GM12878 (cell line): ENCODE measurements at regions of chr20 and their contacts with region 1.

Region 1: DNA sequence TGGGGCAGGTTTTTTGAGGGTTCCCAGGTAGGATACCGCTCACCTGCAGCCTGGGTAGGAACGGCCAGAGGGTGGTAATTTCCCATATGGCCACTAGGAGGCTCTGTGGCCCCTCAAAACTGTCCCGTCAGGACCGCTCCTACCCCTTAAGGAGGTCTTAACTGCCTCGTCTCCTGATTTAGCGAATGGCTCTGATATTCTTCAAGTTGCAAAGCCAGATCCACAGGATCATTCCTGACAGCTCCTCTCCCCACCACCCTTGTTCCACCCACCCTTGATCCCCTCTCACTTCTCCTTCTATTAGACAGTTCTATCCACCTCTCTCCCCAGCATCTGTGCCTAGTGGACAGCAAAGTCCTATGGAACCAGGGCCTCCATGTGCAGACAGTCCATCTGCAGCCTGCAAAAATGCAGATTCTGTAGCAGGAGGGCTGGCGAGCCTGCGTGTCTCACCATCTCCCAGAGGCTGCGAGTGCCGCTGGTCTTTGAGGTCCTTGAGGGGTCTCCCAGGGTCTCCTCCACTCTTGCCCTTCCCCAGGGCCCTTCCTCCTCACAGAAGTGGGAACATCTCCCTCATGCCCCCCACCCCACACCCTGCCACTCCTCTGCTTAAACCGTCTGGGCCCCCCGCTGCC is 34.3 kb upstream of the ZBP1 start:
- DNase-seq: no peak
- ATAC-seq: peak; percentile 97
- H3K4me3 ChIP-seq: no peak overlapping the region
- H3K27ac ChIP-seq: no peak overlapping the region
- H3K4me1 ChIP-seq: no peaks in the 10 kb centered on the region
- H3K27me3 ChIP-seq: no peaks in the 10 kb centered on the region
- CTCF ChIP-seq: peak; percentile 88 to 96 (median 94)
- EP300 ChIP-seq: no peak
- POLR2A ChIP-seq: no peak
- RAD21 ChIP-seq: peak; percentile 93

Region 2: GRCh38 chr20:57573890-57574289 is 80.6 kb before region 1 on chr20:
- CTCF ChIA-PET with region 1: no interaction called
- POLR2A ChIA-PET with region 1: no interaction called
- RAD21 ChIA-PET with region 1: no interaction called
- SMC1A ChIA-PET with region 1: no interaction called
- in situ Hi-C with region 1: no loop called
- intact Hi-C with region 1: no loop called
- DNase-seq: no peak
- ATAC-seq: no peak
- H3K4me3 ChIP-seq: no peak overlapping the region
- H3K27ac ChIP-seq: no peak overlapping the region
- H3K4me1 ChIP-seq: no peaks in the 10 kb centered on the region
- H3K27me3 ChIP-seq: peaks cover 0 to 4% of the 10 kb centered on the region in 2 experiments; a peak in 2 of 4 replicates
- CTCF ChIP-seq: 0 out of 6 replicates have a peak, but pooled peaks of 1 of the 3 experiments have one; percentile 20
- EP300 ChIP-seq: no peak
- POLR2A ChIP-seq: no peak
- RAD21 ChIP-seq: no peak

Region 3: DNA sequence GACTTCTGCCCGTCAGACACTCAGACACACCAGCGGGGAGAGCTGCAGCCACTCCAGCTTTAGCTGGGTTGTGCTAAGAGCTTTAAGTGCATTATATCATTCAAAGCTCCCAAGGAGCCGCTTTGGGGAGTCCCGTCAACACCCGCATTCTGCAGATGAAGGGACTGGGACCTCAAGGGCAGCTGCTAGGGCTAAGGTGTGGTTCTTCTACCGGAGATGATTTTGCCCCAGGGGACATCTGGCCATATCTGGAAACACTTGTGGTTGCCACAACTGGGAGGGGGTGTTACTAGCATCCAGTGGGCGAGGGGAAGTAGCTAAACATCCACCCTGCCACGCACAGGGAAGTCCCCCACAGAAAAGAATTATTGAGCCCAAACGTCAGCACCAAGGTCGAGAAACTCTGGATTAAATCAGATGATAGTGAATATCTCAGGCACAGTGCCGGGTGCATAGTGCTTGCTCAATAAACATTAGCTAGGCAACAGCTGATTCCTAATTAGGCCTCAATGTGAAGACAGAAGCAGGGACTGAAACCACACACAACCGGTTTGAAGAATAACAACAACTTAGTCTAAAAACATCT is 25.7 kb after region 1 on chr20:
- CTCF ChIA-PET with region 1: interaction called, 18 read pairs
- POLR2A ChIA-PET with region 1: no interaction called
- RAD21 ChIA-PET with region 1: interaction called, 9 read pairs
- SMC1A ChIA-PET with region 1: interaction called, 5 read pairs
- in situ Hi-C with region 1: no loop called
- intact Hi-C with region 1: loop called (anchors 2 kb)
- DNase-seq: peak; percentile 86
- ATAC-seq: peak; percentile 77
- H3K4me3 ChIP-seq: peak overlapping the region; percentile 19; the same call in 1 of the 2 replicates
- H3K27ac ChIP-seq: peak overlapping the region; percentile 80
- H3K4me1 ChIP-seq: peaks cover 66% of the 10 kb centered on the region
- H3K27me3 ChIP-seq: no peaks in the 10 kb centered on the region
- CTCF ChIP-seq: no peak
- EP300 ChIP-seq: peak; percentile 94 to 95
- POLR2A ChIP-seq: no peak
- RAD21 ChIP-seq: no peak

Region 4: DNA sequence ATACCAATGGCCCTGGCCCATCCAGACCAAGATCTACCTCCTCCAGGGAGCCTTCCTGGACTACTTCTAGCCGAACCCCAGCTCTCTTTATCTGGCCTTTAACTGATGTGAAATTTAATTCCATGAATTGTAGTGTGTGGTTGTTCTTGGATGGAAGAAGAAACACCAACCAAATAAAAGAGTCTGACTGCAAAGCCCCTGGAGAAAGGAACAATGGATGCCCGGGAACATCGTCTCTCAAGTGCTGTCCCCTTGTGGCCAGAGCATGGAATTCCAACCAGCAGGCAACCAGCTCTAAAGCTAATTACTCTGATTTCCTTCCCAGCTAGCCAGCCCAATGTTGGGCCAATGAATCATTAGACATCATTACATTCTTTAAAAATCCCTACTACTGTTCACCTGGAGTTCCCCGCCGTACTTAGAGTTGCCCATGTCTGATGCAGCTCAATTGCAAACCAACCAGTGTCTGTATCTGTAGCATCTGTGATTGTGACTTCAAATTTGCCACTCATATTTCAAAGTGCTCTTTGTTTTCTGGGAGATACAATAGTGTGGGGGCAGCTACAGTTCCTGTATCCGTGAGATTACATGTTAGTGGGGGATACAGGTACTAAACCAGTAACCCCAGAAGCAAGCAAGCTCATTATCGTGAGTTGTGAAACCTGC is 432.8 kb after region 1 on chr20:
- CTCF ChIA-PET with region 1: interaction called, 48 read pairs
- POLR2A ChIA-PET with region 1: no interaction called
- RAD21 ChIA-PET with region 1: interaction called, 21 read pairs
- SMC1A ChIA-PET with region 1: interaction called, 11 read pairs
- in situ Hi-C with region 1: no loop called
- intact Hi-C with region 1: loop called (anchors 1 kb)
- DNase-seq: no peak
- ATAC-seq: peak; percentile 53; the same call in 1 of the 3 replicates
- H3K4me3 ChIP-seq: no peak overlapping the region
- H3K27ac ChIP-seq: no peak overlapping the region
- H3K4me1 ChIP-seq: no peaks in the 10 kb centered on the region
- H3K27me3 ChIP-seq: peaks cover 2 to 4% of the 10 kb centered on the region in 2 experiments; a peak in 3 of 4 replicates
- CTCF ChIP-seq: peak; percentile 68 to 86 (median 83)
- EP300 ChIP-seq: no peak
- POLR2A ChIP-seq: no peak
- RAD21 ChIP-seq: peak; percentile 66

Region 5: GRCh38 chr20:58179432-58180099 is 525.1 kb after region 1 on chr20:
- CTCF ChIA-PET with region 1: interaction called, 10 read pairs
- POLR2A ChIA-PET with region 1: no interaction called
- RAD21 ChIA-PET with region 1: interaction called, 6 read pairs
- SMC1A ChIA-PET with region 1: interaction called, 3 read pairs
- in situ Hi-C with region 1: loop called (anchors 5 kb)
- intact Hi-C with region 1: loop called (anchors 1 kb)
- DNase-seq: no peak
- ATAC-seq: peak; percentile 98
- H3K4me3 ChIP-seq: no peak overlapping the region
- H3K27ac ChIP-seq: no peak overlapping the region
- H3K4me1 ChIP-seq: no peaks in the 10 kb centered on the region
- H3K27me3 ChIP-seq: peaks cover 0 to 1% of the 10 kb centered on the region in 2 experiments
- CTCF ChIP-seq: peak; percentile 90 to 92 (median 90); a peak in 5 of 6 replicates
- EP300 ChIP-seq: no peak
- POLR2A ChIP-seq: no peak
- RAD21 ChIP-seq: peak; percentile 79